Endothelial cell of umbilical vein (primary cell): ENCODE measurements at regions of chr7 and their contacts with region 1.

Region 1: DNA sequence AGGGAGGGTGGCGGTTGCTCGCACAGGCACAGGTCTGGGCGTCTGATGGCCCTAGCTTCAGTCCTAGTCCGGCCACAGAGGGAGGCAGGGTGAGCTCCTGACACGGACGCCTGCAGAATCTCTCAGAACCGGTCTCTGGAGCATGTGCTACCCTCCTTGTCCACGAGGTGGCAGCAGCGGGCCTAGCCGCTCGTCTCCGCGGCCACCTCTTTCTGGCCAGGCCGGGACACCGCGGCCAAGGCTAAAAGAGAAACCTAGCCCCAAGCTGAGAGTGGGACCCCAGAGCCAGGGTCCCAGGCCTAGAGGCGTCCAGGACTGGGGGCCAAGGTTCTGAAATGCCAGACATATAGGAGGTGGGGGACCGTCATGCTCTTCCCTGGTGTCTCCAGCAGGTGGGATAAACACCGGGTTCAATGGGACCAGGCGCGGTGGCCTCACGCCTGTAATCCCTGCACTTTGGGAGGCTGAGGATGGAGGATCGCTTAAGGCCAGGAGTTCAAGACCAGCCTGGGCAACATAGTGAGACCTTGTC is 3.2 kb upstream of the LAT2 start:
- DNase-seq: peak; percentile 72
- H3K4me3 ChIP-seq: no peak overlapping the region
- H3K27ac ChIP-seq: no peak overlapping the region
- H3K4me1 ChIP-seq: no peaks in the 10 kb centered on the region
- H3K27me3 ChIP-seq: no peaks in the 10 kb centered on the region
- CTCF ChIP-seq: peak; percentile 97
- POLR2A ChIP-seq: no peak

Region 2: GRCh38 chr7:74017125-74017524 is 189.5 kb before region 1 on chr7:
- CTCF ChIA-PET with region 1: no interaction called
- POLR2A ChIA-PET with region 1: no interaction called
- dilution Hi-C with region 1: no loop called
- intact Hi-C with region 1: no loop called
- DNase-seq: no peak
- H3K4me3 ChIP-seq: no peak overlapping the region
- H3K27ac ChIP-seq: no peak overlapping the region
- H3K4me1 ChIP-seq: peaks cover under 1% of the 10 kb centered on the region
- H3K27me3 ChIP-seq: no peaks in the 10 kb centered on the region
- CTCF ChIP-seq: no peak
- POLR2A ChIP-seq: no peak

Region 3: GRCh38 chr7:74068393-74069085 is 138.1 kb before region 1 on chr7:
- CTCF ChIA-PET with region 1: interaction called, 22 read pairs
- POLR2A ChIA-PET with region 1: no interaction called
- dilution Hi-C with region 1: no loop called
- intact Hi-C with region 1: loop called (anchors 1 kb)
- DNase-seq: no peak
- H3K4me3 ChIP-seq: no peak overlapping the region
- H3K27ac ChIP-seq: no peak overlapping the region
- H3K4me1 ChIP-seq: no peaks in the 10 kb centered on the region
- H3K27me3 ChIP-seq: no peaks in the 10 kb centered on the region
- CTCF ChIP-seq: no peak
- POLR2A ChIP-seq: no peak

Region 4: GRCh38 chr7:74217455-74218342 is 11.0 kb after region 1 on chr7:
- CTCF ChIA-PET with region 1: interaction called, 17 read pairs
- POLR2A ChIA-PET with region 1: no interaction called
- dilution Hi-C with region 1: no loop called
- intact Hi-C with region 1: no loop called
- DNase-seq: no peak
- H3K4me3 ChIP-seq: no peak overlapping the region
- H3K27ac ChIP-seq: no peak overlapping the region
- H3K4me1 ChIP-seq: no peaks in the 10 kb centered on the region
- H3K27me3 ChIP-seq: no peaks in the 10 kb centered on the region
- CTCF ChIP-seq: no peak
- POLR2A ChIP-seq: no peak

Region 5: DNA sequence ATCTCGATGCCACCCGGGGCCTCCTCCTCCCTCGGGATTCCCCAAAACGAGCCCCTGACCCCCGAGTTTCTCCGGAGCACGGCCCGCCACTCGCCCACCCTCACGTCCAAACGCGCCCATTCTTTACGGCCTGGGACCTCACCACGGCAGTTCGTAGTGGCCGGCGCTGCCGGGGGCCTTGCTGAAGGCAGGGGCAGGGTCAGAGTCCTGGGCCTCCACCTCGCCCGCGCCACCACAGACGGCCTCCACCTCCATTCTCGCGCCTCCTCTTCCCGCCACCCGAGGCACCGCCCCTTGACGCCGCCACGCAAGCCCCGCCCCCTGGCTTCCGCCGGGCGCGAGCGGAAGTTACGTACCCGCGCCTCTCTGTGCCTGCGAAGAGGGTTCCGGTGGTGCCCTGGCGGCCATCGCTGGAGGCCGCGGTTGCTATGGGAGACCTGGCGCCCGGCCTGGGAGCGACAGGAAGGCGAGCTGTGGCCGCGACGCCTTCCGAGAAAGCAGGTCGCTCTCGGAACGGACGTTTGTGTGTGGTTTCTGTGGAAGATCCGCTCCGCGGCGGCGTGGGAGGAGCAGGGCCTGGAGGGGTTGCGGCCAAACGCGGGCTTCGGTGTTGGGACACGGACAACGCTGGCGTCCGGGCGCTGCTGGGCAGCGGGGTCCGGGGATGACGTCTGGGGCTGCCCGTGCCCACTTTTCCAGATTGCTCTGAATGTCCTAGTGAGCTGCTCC is 47.6 kb after region 1 on chr7 and contains the start of gene RFC2:
- CTCF ChIA-PET with region 1: interaction called, 13 read pairs
- POLR2A ChIA-PET with region 1: interaction called, 3 read pairs
- dilution Hi-C with region 1: no loop called
- intact Hi-C with region 1: no loop called
- DNase-seq: peak; percentile 98
- H3K4me3 ChIP-seq: peak within 1 kb of the TSS; percentile 75 to 89 (median 78)
- H3K27ac ChIP-seq: peak within 1 kb of the TSS; percentile 79
- H3K4me1 ChIP-seq: peaks cover 22% of the 10 kb centered on the region
- H3K27me3 ChIP-seq: no peaks in the 10 kb centered on the region
- CTCF ChIP-seq: peak in 1 of 2 donors; percentile 28
- POLR2A ChIP-seq: peak; percentile 38
- total RNA-seq, gene RFC2: 40.0 and 44.3 TPM in 2 replicates

Region 6: GRCh38 chr7:74289018-74289658 is 82.5 kb after region 1 on chr7 and contains the start of gene CLIP2:
- CTCF ChIA-PET with region 1: interaction called, 17 read pairs
- POLR2A ChIA-PET with region 1: no interaction called
- dilution Hi-C with region 1: no loop called
- intact Hi-C with region 1: loop called (anchors 5 kb)
- DNase-seq: peak; percentile 67
- H3K4me3 ChIP-seq: peak within 1 kb of the TSS; percentile 75 to 90 (median 85)
- H3K27ac ChIP-seq: peak within 1 kb of the TSS; percentile 29
- H3K4me1 ChIP-seq: peaks cover 11% of the 10 kb centered on the region
- H3K27me3 ChIP-seq: no peaks in the 10 kb centered on the region
- CTCF ChIP-seq: no peak
- POLR2A ChIP-seq: peak; percentile 65
- total RNA-seq, gene CLIP2: 37.1 and 38.0 TPM in 2 replicates

Region 7: GRCh38 chr7:74388880-74389415 is 182.3 kb after region 1 on chr7:
- CTCF ChIA-PET with region 1: interaction called, 83 read pairs
- POLR2A ChIA-PET with region 1: no interaction called
- dilution Hi-C with region 1: no loop called
- intact Hi-C with region 1: loop called (anchors 1 kb)
- DNase-seq: no peak
- H3K4me3 ChIP-seq: no peak overlapping the region
- H3K27ac ChIP-seq: no peak overlapping the region
- H3K4me1 ChIP-seq: peaks cover 3% of the 10 kb centered on the region
- H3K27me3 ChIP-seq: no peaks in the 10 kb centered on the region
- CTCF ChIP-seq: no peak
- POLR2A ChIP-seq: no peak